H1 (cell line): ENCODE measurements at regions of chr3 and their contacts with region 1.

Region 1: DNA sequence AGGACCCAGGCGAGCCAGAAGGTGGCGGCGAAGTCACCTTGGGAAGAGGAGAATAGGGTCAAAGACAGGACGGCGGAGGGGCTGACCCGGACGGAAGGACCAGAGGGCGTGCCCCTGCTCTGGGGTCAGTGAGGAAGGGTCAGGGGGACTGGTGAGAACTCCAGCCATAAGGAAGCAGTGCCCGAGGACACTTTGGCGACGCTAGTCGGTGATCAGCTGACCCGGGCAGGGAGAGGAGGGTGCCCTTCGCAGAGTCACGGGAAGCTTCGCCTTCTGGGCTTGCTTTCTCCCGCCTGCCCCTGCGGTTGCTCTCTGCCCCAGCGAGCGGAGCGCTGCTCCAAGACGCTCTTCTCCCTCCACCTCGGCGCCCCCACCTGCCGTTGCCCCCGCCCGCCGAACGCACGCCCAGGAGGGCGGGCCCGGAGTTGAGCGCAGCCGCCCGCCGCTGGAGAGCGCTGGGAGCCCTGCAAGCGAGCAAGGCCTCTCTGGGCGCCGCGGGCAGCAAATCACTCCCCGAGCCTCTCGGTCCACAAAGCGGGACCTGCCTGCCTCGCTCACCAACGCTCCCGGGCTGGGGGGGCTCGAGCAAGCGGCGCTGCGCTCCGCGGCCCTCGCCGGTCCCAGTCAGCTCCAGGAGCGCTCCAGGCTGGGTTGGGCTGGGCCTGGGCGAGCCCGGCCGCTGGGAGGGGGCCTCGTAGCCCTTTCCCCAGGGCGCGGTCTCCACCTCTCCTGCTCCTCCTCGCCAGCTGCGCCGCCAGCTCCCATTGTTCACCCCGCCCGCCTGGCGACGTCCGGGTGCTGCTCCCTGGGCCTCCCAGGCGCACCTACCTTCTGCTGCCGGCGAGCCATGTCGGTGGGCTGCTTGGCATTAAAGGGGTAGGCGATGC is 1.2 kb downstream of the CADPS start:
- DNase-seq: peak; percentile 70 to 90
- H3K4me3 ChIP-seq: peak overlapping the region; percentile 67 to 82 (median 74)
- H3K27ac ChIP-seq: peak overlapping the region; percentile 35; the same call in 1 of the 2 replicates
- H3K4me1 ChIP-seq: peaks cover 0 to 1% (median 0%) of the 10 kb centered on the region in 4 experiments; a peak in 3 of 7 replicates
- H3K27me3 ChIP-seq: no peaks in the 10 kb centered on the region
- CTCF ChIP-seq: peak; percentile 71 to 76 (median 76)
- EP300 ChIP-seq: no peak
- POLR2A ChIP-seq: peak in 1 of 2 experiments; percentile 54; a peak in 1 of 3 replicates
- RAD21 ChIP-seq: peak; percentile 78 to 85

Region 2: DNA sequence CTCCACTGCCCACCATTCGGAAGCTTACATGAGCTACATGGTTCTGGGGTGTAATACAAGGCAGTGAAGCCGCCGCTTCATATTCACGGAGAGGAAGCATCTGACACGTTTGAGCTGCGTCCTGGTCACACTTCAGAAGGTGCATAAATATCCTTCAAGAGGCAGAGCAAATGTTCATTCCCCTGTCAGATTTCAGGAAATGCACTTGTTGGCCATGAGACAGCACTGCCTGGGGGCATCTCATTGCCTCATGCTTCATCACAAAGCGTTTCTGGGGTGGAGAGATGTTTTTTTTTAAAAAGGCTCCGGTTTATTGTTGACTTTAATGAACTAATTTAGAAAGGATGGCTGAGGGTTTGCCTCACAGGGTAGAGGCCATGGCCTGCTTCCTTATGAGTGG is 118.7 kb before region 1 on chr3:
- CTCF ChIA-PET with region 1: no interaction called
- POLR2A ChIA-PET with region 1: no interaction called
- DNase-seq: no peak
- H3K4me3 ChIP-seq: no peak overlapping the region
- H3K27ac ChIP-seq: no peak overlapping the region
- H3K4me1 ChIP-seq: no peaks in the 10 kb centered on the region
- H3K27me3 ChIP-seq: no peaks in the 10 kb centered on the region
- CTCF ChIP-seq: no peak
- EP300 ChIP-seq: no peak
- POLR2A ChIP-seq: no peak
- RAD21 ChIP-seq: no peak

Region 3: DNA sequence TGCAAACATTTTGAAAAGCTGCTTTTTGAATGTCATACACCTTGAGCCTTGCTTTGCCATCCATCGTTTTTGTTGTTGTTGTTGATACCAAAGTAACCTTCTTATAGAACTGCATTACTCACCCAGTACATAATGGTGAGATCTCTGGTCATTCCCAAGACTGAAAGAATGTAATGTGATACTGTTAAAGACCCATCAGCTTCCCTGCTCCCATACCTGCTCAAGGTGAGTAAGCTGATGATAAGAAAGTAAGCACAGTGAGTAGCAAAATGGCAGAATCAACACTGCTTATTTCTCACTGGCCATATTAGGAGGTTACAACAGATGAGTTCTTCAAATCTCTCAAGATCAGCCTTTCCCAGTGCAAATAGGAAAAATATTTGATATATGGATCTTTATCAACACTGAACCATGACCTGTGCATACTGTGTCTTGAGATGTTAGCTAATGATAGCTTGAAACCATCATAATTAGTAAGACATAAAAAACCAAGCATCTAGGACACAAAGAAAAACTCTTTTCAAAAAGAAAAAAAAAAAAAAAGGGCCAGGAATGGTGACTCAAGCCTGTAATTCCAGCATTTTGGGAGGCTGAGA is 88.5 kb before region 1 on chr3:
- CTCF ChIA-PET with region 1: no interaction called
- POLR2A ChIA-PET with region 1: no interaction called
- DNase-seq: no peak
- H3K4me3 ChIP-seq: no peak overlapping the region
- H3K27ac ChIP-seq: no peak overlapping the region
- H3K4me1 ChIP-seq: peaks cover 0 to 5% (median 2%) of the 10 kb centered on the region in 4 experiments; a peak in 3 of 7 replicates
- H3K27me3 ChIP-seq: no peaks in the 10 kb centered on the region
- CTCF ChIP-seq: no peak
- EP300 ChIP-seq: no peak
- POLR2A ChIP-seq: no peak
- RAD21 ChIP-seq: no peak

Region 4: GRCh38 chr3:62833531-62833930 is 40.5 kb before region 1 on chr3:
- CTCF ChIA-PET with region 1: interaction called, 10 read pairs
- POLR2A ChIA-PET with region 1: interaction called, 3 read pairs
- DNase-seq: no peak
- H3K4me3 ChIP-seq: no peak overlapping the region
- H3K27ac ChIP-seq: no peak overlapping the region
- H3K4me1 ChIP-seq: no peaks in the 10 kb centered on the region
- H3K27me3 ChIP-seq: no peaks in the 10 kb centered on the region
- CTCF ChIP-seq: peak; percentile 63 to 70 (median 70)
- EP300 ChIP-seq: no peak
- POLR2A ChIP-seq: no peak
- RAD21 ChIP-seq: peak; percentile 71 to 80

Region 5: DNA sequence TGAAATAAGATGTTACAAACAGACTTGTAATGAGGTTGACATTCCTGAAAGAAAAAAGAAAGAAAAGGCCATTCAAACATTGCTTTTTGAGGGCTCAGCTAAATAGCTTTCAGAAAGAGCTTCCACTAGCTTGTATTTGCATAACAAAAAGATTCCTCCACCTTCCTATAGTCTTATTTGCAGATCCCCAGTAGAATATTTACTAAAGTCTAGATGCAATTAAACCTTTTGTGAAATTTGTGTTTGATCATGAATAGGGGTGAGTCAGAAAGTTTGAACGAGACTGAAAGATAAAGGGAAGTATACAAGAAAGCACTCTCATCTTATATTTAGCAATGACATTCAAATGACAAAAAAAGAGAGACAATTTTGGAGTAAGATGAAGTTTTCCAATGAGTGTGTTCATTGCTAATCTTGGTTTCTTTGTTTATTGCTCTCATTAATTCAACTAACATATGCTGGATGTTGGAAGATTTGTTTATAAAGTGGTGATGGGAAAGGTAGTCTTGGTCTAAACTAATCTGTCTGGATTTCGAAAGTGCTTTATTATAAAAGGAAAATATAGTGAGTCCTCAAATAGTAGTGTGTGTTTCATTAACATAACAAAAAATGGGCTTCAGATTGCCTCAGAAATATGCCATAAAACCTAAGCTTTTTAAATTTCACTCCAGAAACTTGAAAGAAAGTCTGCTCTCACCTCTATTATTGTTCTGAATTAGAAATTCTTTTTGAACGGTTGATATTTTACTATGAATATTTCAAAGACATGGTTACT is 10.3 kb after region 1 on chr3:
- CTCF ChIA-PET with region 1: interaction called, 4 read pairs
- POLR2A ChIA-PET with region 1: interaction called, 32 read pairs
- DNase-seq: no peak
- H3K4me3 ChIP-seq: peak overlapping the region in 1 of 4 experiments; percentile 34; a peak in 1 of 8 replicates
- H3K27ac ChIP-seq: peak overlapping the region; percentile 4; the same call in 1 of the 2 replicates
- H3K4me1 ChIP-seq: peaks cover 0 to 22% (median 11%) of the 10 kb centered on the region in 4 experiments; a peak in 6 of 7 replicates
- H3K27me3 ChIP-seq: no peaks in the 10 kb centered on the region
- CTCF ChIP-seq: no peak
- EP300 ChIP-seq: no peak
- POLR2A ChIP-seq: no peak
- RAD21 ChIP-seq: no peak

Region 6: GRCh38 chr3:63193629-63194028 is 319.6 kb after region 1 on chr3:
- CTCF ChIA-PET with region 1: interaction called, 37 read pairs
- POLR2A ChIA-PET with region 1: no interaction called
- DNase-seq: no peak
- H3K4me3 ChIP-seq: no peak overlapping the region
- H3K27ac ChIP-seq: no peak overlapping the region
- H3K4me1 ChIP-seq: no peaks in the 10 kb centered on the region
- H3K27me3 ChIP-seq: no peaks in the 10 kb centered on the region
- CTCF ChIP-seq: peak in 2 of 3 experiments; percentile 41 to 47; a peak in 2 of 4 replicates
- EP300 ChIP-seq: no peak
- POLR2A ChIP-seq: no peak
- RAD21 ChIP-seq: peak; percentile 81 to 86